Sigmoid colon (tissue), 7 donors: ENCODE measurements at regions of chr15 and their contacts with region 1.

Region 1: DNA sequence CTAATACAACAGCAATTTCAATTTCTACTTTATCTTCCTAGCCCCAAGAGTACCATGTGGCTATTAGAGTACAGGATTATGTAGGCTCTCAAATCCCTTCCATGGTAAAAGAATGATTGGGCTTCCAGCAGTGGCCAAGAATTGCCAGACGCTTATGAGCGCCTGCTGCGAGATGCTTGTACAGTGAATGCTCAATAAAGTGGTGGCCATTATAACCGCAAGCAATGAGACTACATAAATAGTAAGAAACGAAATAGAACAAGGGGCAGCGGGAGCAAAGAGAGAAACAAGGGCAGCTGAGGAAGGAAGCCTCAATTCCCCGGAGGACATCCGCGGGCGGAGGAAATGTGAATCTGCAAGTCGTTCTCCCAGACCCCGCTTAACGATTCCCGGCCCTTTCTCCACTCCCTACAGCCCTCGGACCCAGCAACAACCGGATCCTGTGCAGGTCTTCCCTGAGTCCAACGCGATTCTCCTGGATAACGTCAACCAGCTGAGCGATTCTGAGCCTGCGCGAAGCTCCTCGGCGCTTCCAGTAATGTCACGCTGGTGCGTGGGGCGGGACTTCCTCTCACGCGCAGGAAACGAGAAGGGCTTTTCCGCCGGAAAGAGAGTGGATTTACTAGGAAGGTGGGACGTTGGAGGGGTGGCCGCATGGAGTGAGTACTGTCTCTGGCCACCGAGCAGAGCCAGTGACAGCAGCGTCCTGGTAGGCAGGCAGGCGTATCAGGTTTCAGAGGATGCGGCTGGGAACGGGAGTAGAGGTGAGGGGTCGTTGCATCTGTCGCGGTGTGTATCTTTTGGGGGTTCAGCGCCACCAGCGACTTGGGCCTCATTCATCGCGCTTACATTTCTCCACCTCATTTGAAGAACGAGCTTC is 40.5 kb upstream of the AP3B2 start:
- DNase-seq: peak; percentile 96
- H3K4me3 ChIP-seq: peak overlapping the region; percentile 63 to 78 (median 66)
- H3K27ac ChIP-seq: peak overlapping the region; percentile 83 to 92 (median 87)
- H3K4me1 ChIP-seq: peaks cover 0 to 21% (median 20%) of the 10 kb centered on the region in 4 donors
- H3K27me3 ChIP-seq: no peaks in the 10 kb centered on the region
- CTCF ChIP-seq: no peak
- EP300 ChIP-seq: peak in 1 of 4 donors; percentile 63
- POLR2A ChIP-seq: peak; percentile 61 to 66

Region 2: GRCh38 chr15:82540055-82540983 is 209.9 kb before region 1 on chr15 and contains the start of gene RPS17:
- intact Hi-C with region 1: loop called (anchors 1 kb)
- DNase-seq: peak; percentile 98
- H3K4me3 ChIP-seq: peak within 1 kb of the TSS; percentile 64 to 77 (median 72)
- H3K27ac ChIP-seq: peak within 1 kb of the TSS; percentile 85 to 93 (median 92)
- H3K4me1 ChIP-seq: peaks cover 0 to 30% (median 20%) of the 10 kb centered on the region in 4 donors
- H3K27me3 ChIP-seq: no peaks in the 10 kb centered on the region
- CTCF ChIP-seq: peak; percentile 96 to 99 (median 97)
- EP300 ChIP-seq: peak in 1 of 4 donors; percentile 3
- POLR2A ChIP-seq: peak; percentile 73 to 79
- total RNA-seq, gene RPS17: 1,463 to 4,003 (median 3,231) TPM

Region 3: GRCh38 chr15:82571722-82572222 is 178.4 kb before region 1 on chr15:
- intact Hi-C with region 1: loop called (anchors 10 kb)
- DNase-seq: peak; percentile 92
- H3K4me3 ChIP-seq: peak overlapping the region; percentile 35 to 54 (median 48)
- H3K27ac ChIP-seq: peak overlapping the region; percentile 75 to 81 (median 77)
- H3K4me1 ChIP-seq: peaks cover 0 to 21% (median 15%) of the 10 kb centered on the region in 4 donors
- H3K27me3 ChIP-seq: no peaks in the 10 kb centered on the region
- CTCF ChIP-seq: no peak
- EP300 ChIP-seq: peak in 1 of 4 donors; percentile 41
- POLR2A ChIP-seq: peak in 1 of 2 donors; percentile 6

Region 4: DNA sequence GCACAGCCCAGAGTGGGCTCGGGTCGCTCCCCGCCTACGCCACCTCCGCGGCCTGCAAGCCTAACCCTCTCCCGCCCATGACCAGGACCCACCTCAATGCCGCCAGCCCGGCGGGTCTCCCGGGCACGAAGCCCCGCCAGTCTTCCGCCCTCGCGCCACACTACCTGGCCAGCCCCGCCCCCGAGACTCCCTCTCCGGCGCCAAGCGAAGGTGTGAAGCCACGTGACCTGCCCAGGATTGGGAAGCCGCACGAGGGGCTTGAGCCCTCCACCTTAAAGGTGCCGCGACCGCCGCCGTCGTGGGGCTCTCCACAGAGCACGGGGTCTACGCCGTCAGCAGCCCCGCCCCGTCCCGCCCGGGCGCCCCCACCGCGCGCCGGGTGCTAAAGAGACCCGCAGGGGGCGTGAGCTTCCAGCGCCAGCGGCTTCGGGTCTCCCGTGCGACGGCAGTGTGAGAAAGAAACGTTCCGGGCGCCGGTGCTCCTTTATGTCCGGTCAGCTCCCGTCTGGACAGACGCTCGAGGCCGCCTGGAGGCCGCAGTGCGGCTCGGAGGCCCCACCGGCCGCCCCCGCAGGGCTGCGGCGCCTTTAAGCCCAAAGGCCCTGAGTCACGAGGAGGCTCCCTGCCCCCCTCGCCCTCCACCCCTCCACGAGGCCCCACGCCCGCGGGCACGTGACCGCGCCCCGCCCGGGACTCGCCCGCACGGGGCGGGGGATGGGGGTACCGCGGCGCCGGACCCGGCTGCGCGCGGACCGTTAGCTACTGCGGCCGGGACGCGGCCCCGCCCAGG is 103.0 kb before region 1 on chr15 and contains the start of gene CPEB1:
- intact Hi-C with region 1: loop called (anchors 5 kb)
- DNase-seq: peak; percentile 88
- H3K4me3 ChIP-seq: peak within 1 kb of the TSS; percentile 30 to 62 (median 58)
- H3K27ac ChIP-seq: peak within 1 kb of the TSS; percentile 51 to 63 (median 54)
- H3K4me1 ChIP-seq: peaks cover 0 to 28% (median 27%) of the 10 kb centered on the region in 4 donors
- H3K27me3 ChIP-seq: peaks cover 0 to 27% (median 0%) of the 10 kb centered on the region in 3 donors
- CTCF ChIP-seq: no peak
- EP300 ChIP-seq: no peak
- POLR2A ChIP-seq: no peak
- total RNA-seq, gene CPEB1: 8.3 to 13.2 (median 12.1) TPM

Region 5: DNA sequence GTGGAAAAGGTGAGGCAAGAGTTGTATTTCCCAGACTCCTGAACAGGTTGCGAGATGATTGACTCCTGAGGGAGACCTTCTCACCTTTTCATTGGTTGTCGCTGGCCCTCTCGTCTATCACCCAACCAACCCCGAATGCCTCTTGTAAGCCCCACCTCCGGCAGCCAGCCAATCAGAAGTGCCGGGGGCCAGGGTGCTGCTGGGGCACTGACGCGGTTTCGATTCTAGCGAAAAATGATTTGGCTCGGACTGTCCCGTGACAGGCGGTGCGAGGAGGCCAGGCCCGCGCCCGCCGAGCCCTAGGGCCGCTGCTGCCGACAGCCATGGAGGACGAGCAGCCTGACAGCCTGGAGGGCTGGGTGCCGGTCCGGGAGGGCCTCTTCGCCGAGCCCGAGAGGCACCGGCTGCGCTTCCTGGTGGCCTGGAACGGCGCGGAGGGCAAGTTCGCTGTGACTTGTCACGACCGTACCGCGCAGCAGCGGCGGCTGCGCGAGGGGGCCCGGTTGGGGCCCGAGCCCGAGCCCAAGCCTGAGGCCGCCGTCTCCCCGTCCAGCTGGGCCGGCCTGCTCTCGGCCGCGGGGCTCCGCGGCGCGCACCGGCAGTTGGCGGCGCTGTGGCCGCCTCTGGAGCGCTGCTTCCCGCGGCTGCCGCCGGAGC is 59.3 kb after region 1 on chr15 and contains the start of gene WHAMM:
- intact Hi-C with region 1: loop called (anchors 2 kb)
- DNase-seq: peak; percentile 100
- H3K4me3 ChIP-seq: peak within 1 kb of the TSS; percentile 71 to 96 (median 82)
- H3K27ac ChIP-seq: peak within 1 kb of the TSS; percentile 96 to 100 (median 98)
- H3K4me1 ChIP-seq: peaks cover 0 to 25% (median 19%) of the 10 kb centered on the region in 4 donors
- H3K27me3 ChIP-seq: no peaks in the 10 kb centered on the region
- CTCF ChIP-seq: no peak
- EP300 ChIP-seq: peak in 1 of 4 donors; percentile 16
- POLR2A ChIP-seq: peak; percentile 91 to 92
- total RNA-seq, gene WHAMM: 7.6 to 10.5 (median 9.0) TPM

Region 6: DNA sequence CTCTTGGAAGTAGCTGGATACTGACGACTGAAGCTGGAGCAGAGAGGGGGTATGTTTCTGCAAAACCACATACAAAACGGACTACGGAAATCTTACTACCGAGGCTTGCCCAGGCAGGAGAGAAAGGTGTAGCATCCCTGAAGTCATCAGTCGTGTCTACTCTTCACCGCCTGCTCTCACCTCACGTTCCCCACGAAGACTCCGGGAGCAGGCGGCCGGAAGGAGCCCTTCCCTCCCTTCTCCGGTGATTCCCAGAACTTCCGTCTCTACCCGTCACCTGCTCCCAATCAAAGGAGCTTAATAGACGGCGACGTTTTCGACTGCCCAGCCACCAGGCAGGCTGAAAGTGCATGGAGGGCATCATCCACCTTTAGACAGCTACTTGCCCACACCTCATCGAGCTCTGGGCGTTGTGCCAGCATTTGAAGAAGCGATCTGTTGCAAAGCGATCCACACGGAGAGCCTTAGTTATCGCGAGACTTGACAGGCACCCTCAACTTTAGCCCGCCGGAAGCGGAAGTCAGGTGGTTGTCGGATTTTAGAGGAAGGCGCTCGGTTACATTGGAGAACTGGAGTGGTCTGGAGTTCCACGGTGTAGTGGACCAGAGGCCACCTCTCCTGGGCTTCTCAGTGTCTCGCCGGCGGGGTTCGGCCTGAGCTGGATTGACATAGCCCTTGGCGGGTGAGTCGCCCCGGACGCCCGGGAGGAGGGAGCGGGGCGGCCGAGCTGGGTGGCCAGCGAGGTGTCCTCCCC is 235.7 kb after region 1 on chr15 and contains the start of gene RAMAC:
- intact Hi-C with region 1: loop called (anchors 5 kb)
- DNase-seq: peak; percentile 97
- H3K4me3 ChIP-seq: peak within 1 kb of the TSS; percentile 59 to 96 (median 76)
- H3K27ac ChIP-seq: peak within 1 kb of the TSS; percentile 72 to 80 (median 78)
- H3K4me1 ChIP-seq: peaks cover 0 to 23% (median 18%) of the 10 kb centered on the region in 4 donors
- H3K27me3 ChIP-seq: no peaks in the 10 kb centered on the region
- CTCF ChIP-seq: no peak
- EP300 ChIP-seq: no peak
- POLR2A ChIP-seq: peak in 1 of 2 donors; percentile 34
- total RNA-seq, gene RAMAC: 10.8 to 21.8 (median 19.2) TPM